WTC11 (cell line): ENCODE measurements at regions of chr6 and their contacts with region 1.

Region 1: DNA sequence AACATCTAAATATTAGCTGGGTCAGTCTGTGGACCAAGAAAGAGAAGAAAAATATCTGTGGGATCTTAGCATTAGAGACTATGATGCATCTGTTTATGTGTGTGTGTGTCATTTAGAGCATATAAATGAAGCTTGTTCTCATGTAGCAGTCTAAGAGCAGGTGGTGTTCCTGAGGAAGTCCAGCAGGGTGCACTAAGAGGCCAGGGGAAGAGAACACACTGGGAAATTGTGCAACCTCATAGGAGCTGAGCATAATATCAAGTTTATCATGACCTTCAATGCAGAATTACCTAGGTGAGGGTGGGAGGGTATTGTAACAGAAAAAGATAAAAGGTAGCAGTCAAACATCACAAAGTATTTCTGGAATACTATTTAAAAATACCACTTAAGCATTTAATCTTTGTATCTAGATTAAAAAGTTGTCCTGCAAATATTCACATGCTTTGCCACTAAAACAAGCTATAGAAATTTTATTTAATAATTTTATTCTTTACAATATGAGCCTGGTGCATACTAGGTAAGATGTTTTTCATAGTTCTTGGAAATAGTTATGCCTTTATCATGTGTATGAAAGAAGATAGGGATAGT is 80.5 kb downstream of the SMPDL3A start:
- DNase-seq: peak; percentile 22
- ATAC-seq: peak; percentile 96
- H3K4me3 Mint-ChIP-seq: no peak overlapping the region
- H3K27ac Mint-ChIP-seq: no peak overlapping the region
- H3K4me1 Mint-ChIP-seq: peaks cover 15% of the 10 kb centered on the region
- H3K27me3 Mint-ChIP-seq: no peaks in the 10 kb centered on the region
- CTCF ChIP-seq: peak; percentile 50; the same call in 1 of the 2 replicates

Region 2: DNA sequence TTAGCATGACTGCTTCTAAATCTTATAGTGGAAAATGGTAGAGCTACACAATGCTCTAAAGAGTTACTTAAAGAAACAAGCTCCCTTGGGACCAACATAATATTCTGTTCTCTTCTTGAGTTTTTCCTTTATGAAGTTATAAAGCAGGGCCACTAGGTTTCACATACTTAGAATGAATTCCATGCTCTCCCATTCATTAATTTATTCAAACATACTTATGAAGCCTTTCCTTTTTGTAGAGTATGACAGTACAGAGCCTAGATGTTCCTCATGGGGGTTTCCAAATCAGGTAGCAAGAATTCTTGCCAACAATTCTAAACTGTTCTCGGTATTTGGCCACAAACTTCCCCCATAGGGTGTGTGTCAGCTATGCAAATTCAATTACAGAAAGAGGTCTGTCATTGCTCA is 110.6 kb before region 1 on chr6:
- CTCF ChIA-PET with region 1: no interaction called
- POLR2A ChIA-PET with region 1: no interaction called
- DNase-seq: no peak
- ATAC-seq: no peak
- H3K4me3 Mint-ChIP-seq: no peak overlapping the region
- H3K27ac Mint-ChIP-seq: no peak overlapping the region
- H3K4me1 Mint-ChIP-seq: peaks cover 21% of the 10 kb centered on the region
- H3K27me3 Mint-ChIP-seq: peaks cover 64% of the 10 kb centered on the region
- CTCF ChIP-seq: no peak

Region 3: DNA sequence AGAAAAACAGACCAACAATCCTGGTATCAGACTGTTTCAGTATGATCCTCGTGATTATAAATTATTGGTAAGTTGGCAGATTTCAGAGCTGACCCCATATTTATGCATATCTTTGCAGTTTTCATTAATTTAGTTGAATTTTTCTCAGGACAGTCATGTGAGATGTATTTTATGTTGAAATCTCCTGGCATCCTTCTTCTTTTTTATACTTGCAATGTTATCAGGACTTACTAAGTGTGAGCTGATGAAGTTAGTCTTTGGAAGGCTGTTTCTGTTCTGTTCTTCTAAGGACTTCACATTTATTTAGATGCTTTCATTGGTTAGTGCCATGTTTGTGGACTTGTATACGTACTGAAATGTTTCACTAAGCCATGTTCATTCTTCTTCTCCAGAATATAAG is 63.2 kb before region 1 on chr6:
- CTCF ChIA-PET with region 1: no interaction called
- POLR2A ChIA-PET with region 1: no interaction called
- DNase-seq: no peak
- ATAC-seq: no peak
- H3K4me3 Mint-ChIP-seq: no peak overlapping the region
- H3K27ac Mint-ChIP-seq: no peak overlapping the region
- H3K4me1 Mint-ChIP-seq: peaks cover 6% of the 10 kb centered on the region
- H3K27me3 Mint-ChIP-seq: no peaks in the 10 kb centered on the region
- CTCF ChIP-seq: no peak

Region 4: DNA sequence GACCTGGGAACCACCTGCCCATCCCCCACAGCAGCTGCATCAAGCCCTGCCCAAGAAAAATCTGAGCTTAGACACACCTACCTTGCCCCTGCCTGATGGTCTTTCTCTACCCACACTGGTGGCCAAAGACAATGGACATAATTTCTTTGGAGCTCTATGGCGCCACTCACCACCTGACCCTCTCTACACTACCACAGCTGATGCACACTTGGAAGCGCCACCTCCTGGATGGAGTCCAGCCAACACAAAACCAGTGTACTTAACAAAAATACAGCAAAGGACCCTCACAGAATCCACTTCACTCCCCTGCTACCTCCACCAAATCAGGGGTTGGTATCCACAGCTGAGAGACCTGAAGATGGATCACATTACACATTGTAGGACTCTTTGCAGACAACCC is 86.8 kb after region 1 on chr6:
- CTCF ChIA-PET with region 1: interaction called, 12 read pairs
- POLR2A ChIA-PET with region 1: no interaction called
- DNase-seq: no peak
- ATAC-seq: peak; percentile 63
- H3K4me3 Mint-ChIP-seq: no peak overlapping the region
- H3K27ac Mint-ChIP-seq: no peak overlapping the region
- H3K4me1 Mint-ChIP-seq: peaks cover 6% of the 10 kb centered on the region
- H3K27me3 Mint-ChIP-seq: no peaks in the 10 kb centered on the region
- CTCF ChIP-seq: no peak

Region 5: GRCh38 chr6:123201869-123202372 is 332.4 kb after region 1 on chr6:
- CTCF ChIA-PET with region 1: no interaction called
- POLR2A ChIA-PET with region 1: no interaction called
- DNase-seq: peak; percentile 16
- ATAC-seq: no peak
- H3K4me3 Mint-ChIP-seq: no peak overlapping the region
- H3K27ac Mint-ChIP-seq: no peak overlapping the region
- H3K4me1 Mint-ChIP-seq: peaks cover 20% of the 10 kb centered on the region
- H3K27me3 Mint-ChIP-seq: peaks cover 10% of the 10 kb centered on the region
- CTCF ChIP-seq: no peak

Region 6: GRCh38 chr6:123380257-123380656 is 510.7 kb after region 1 on chr6:
- CTCF ChIA-PET with region 1: interaction called, 15 read pairs
- POLR2A ChIA-PET with region 1: no interaction called
- DNase-seq: no peak
- ATAC-seq: peak; percentile 91
- H3K4me3 Mint-ChIP-seq: no peak overlapping the region
- H3K27ac Mint-ChIP-seq: no peak overlapping the region
- H3K4me1 Mint-ChIP-seq: no peaks in the 10 kb centered on the region
- H3K27me3 Mint-ChIP-seq: no peaks in the 10 kb centered on the region
- CTCF ChIP-seq: no peak